Activated CD8-positive, alpha-beta T cell treated with anti-CD3 and anti-CD28 coated beads, Interleukin-2, amount 10 ng/mL, durations not matched to agents 7 days and 5 days (primary cell): ENCODE measurements at regions of chr4 and their contacts with region 1.

Region 1: DNA sequence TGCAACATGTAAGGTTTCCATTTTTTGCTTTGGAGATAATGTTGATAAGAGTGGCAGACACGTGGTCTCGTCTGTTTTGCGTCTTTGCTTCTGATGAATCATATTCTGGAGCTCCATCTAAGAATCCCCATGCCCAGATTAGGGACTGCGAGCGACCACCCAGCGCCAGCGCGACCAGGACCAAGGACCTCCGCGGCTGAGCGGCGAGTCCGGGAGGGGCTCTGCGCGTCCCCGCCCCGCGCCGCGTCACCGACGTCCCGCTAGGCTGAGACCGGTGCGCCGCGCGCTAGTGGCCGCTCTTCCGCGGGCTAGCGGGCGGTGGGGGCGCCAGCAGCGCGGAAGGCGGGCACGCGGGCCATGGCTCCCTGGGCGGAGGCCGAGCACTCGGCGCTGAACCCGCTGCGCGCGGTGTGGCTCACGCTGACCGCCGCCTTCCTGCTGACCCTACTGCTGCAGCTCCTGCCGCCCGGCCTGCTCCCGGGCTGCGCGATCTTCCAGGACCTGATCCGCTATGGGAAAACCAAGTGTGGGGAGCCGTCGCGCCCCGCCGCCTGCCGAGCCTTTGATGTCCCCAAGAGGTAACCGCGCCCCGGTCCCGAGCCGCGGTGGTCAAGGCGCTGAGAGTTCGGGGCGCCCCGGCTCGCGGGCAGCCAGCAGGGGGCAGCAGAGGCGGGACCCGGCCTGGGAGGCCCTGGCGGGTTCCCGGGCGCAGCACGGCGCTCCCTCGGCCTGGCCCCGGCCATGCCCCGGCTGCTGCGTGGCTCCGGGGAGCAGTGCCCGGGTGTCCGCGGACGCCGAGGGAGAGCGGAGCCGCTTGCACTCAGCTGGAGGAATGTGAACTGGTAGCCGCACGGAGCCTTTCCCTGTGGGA is at the start of gene SRD5A3:
- DNase-seq: peak; percentile 82
- ATAC-seq: peak; percentile 95
- H3K4me3 Mint-ChIP-seq: peak within 1 kb of the TSS; percentile 84
- H3K27ac Mint-ChIP-seq: peak within 1 kb of the TSS; percentile 88
- H3K4me1 Mint-ChIP-seq: peaks cover 17% of the 10 kb centered on the region
- H3K27me3 Mint-ChIP-seq: no peaks in the 10 kb centered on the region
- total RNA-seq, gene SRD5A3: 6.5 to 8.6 TPM

Region 2: GRCh38 chr4:54855191-54855854 is 490.9 kb before region 1 on chr4:
- CTCF ChIA-PET with region 1: no interaction called
- POLR2A ChIA-PET with region 1: no interaction called
- DNase-seq: no peak
- ATAC-seq: no peak
- H3K4me3 Mint-ChIP-seq: no peak overlapping the region
- H3K27ac Mint-ChIP-seq: no peak overlapping the region
- H3K4me1 Mint-ChIP-seq: no peaks in the 10 kb centered on the region
- H3K27me3 Mint-ChIP-seq: no peaks in the 10 kb centered on the region

Region 3: GRCh38 chr4:55312489-55313101 is 33.6 kb before region 1 on chr4:
- CTCF ChIA-PET with region 1: interaction called, 10 read pairs
- POLR2A ChIA-PET with region 1: no interaction called
- DNase-seq: peak; percentile 46
- ATAC-seq: no peak
- H3K4me3 Mint-ChIP-seq: no peak overlapping the region
- H3K27ac Mint-ChIP-seq: no peak overlapping the region
- H3K4me1 Mint-ChIP-seq: no peaks in the 10 kb centered on the region
- H3K27me3 Mint-ChIP-seq: no peaks in the 10 kb centered on the region

Region 4: DNA sequence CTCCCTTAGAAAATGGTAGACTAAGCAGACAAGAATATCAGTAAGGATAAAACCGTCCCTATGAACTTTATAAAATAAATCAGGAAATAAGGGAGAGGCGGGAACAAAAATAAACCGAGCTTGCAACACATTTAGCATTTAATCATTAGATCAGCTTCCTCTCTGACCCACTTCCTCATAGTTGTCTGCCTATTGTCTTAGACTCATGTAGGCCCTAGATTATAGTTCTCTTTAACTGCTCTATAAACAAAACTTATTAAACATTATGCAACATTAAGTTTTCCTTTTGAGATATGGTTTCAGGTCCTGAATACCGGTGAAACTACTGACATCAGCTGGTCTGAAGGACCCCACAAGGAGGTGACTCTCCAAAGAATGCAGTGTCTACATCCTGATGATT is 16.0 kb before region 1 on chr4:
- CTCF ChIA-PET with region 1: interaction called, 13 read pairs
- POLR2A ChIA-PET with region 1: no interaction called
- DNase-seq: no peak
- ATAC-seq: no peak
- H3K4me3 Mint-ChIP-seq: no peak overlapping the region
- H3K27ac Mint-ChIP-seq: no peak overlapping the region
- H3K4me1 Mint-ChIP-seq: peaks cover 4% of the 10 kb centered on the region
- H3K27me3 Mint-ChIP-seq: peaks cover 2% of the 10 kb centered on the region

Region 5: GRCh38 chr4:55395529-55396307 is 49.5 kb after region 1 on chr4 and contains the start of gene TMEM165:
- CTCF ChIA-PET with region 1: interaction called, 15 read pairs
- POLR2A ChIA-PET with region 1: no interaction called
- DNase-seq: peak; percentile 93
- ATAC-seq: peak; percentile 96
- H3K4me3 Mint-ChIP-seq: peak within 1 kb of the TSS; percentile 88
- H3K27ac Mint-ChIP-seq: peak within 1 kb of the TSS; percentile 94
- H3K4me1 Mint-ChIP-seq: peaks cover 44% of the 10 kb centered on the region
- H3K27me3 Mint-ChIP-seq: no peaks in the 10 kb centered on the region
- total RNA-seq, gene TMEM165: 66.2 to 68.7 TPM

Region 6: GRCh38 chr4:55491486-55491885 is 145.3 kb after region 1 on chr4:
- CTCF ChIA-PET with region 1: no interaction called
- POLR2A ChIA-PET with region 1: no interaction called
- DNase-seq: no peak
- ATAC-seq: no peak
- H3K4me3 Mint-ChIP-seq: no peak overlapping the region
- H3K27ac Mint-ChIP-seq: no peak overlapping the region
- H3K4me1 Mint-ChIP-seq: no peaks in the 10 kb centered on the region
- H3K27me3 Mint-ChIP-seq: no peaks in the 10 kb centered on the region

Region 7: GRCh38 chr4:55866973-55867574 is 520.9 kb after region 1 on chr4:
- CTCF ChIA-PET with region 1: interaction called, 10 read pairs
- POLR2A ChIA-PET with region 1: no interaction called
- DNase-seq: peak; percentile 31
- ATAC-seq: peak; percentile 93
- H3K4me3 Mint-ChIP-seq: no peak overlapping the region
- H3K27ac Mint-ChIP-seq: no peak overlapping the region
- H3K4me1 Mint-ChIP-seq: peaks cover 22% of the 10 kb centered on the region
- H3K27me3 Mint-ChIP-seq: no peaks in the 10 kb centered on the region